ENCODE measurements at regions of chr12 and their contacts with region 1.

Region 1: GRCh38 chr12:56391721-56392120 is 29.1 kb upstream of the APOF start:
- DNase-seq: no peak
- H3K4me3 ChIP-seq: no peak overlapping the region
- H3K27ac ChIP-seq: no peak overlapping the region
- H3K27me3 ChIP-seq: no peaks in the 10 kb centered on the region
- CTCF ChIP-seq: no peak

Region 2: DNA sequence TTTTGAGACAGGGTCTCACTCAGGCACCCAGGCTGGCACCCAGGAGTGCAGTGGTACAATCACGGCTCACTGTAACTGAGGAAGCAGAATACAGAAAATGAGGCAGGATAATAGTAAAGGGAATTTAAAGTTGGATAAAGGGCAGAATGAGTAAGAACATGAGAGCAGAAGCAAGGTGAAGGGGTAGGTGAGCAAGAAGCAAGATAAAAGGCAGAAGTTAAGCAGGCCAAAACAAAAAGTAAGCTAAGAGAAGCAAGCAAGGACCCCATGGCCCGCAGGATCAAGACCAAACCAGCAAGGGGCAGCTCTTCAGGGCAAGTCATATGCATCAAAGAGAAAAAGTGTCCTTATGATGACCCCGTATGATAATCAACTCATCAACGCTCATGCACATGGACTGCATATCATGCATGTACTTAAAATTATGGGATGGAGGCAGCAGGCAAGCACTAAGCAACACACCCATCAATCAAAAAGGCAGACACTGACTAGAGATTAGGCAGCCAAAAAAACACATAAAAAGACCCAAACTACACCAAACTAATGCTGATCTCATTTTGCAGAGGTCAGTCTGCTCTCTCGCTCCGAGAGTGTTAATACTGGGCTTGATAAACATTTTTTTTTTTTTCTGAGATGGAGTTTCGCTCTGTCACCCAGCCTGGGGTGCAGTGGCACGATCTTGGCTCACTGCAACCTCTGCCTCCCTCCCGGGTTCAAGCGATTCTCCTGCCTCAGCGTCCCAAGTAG is 45.9 kb after region 1 on chr12:
- intact Hi-C with region 1: loop called in 1 of 2 experiments (anchors 5 kb)
- DNase-seq: no peak
- H3K4me3 ChIP-seq: no peak overlapping the region
- H3K27ac ChIP-seq: no peak overlapping the region
- H3K27me3 ChIP-seq: no peaks in the 10 kb centered on the region
- CTCF ChIP-seq: no peak